IMR-90 (cell line): ENCODE measurements at regions of chr2 and their contacts with region 1.

Region 1: GRCh38 chr2:158903711-158904443 is 64.6 kb upstream of the TANC1 start:
- DNase-seq: no peak
- ATAC-seq: no peak
- H3K4me3 ChIP-seq: no peak overlapping the region
- H3K27ac ChIP-seq: no peak overlapping the region
- H3K4me1 ChIP-seq: peaks cover 2% of the 10 kb centered on the region
- H3K27me3 ChIP-seq: no peaks in the 10 kb centered on the region
- CTCF ChIP-seq: no peak
- POLR2A ChIP-seq: no peak
- RAD21 ChIP-seq: no peak

Region 2: DNA sequence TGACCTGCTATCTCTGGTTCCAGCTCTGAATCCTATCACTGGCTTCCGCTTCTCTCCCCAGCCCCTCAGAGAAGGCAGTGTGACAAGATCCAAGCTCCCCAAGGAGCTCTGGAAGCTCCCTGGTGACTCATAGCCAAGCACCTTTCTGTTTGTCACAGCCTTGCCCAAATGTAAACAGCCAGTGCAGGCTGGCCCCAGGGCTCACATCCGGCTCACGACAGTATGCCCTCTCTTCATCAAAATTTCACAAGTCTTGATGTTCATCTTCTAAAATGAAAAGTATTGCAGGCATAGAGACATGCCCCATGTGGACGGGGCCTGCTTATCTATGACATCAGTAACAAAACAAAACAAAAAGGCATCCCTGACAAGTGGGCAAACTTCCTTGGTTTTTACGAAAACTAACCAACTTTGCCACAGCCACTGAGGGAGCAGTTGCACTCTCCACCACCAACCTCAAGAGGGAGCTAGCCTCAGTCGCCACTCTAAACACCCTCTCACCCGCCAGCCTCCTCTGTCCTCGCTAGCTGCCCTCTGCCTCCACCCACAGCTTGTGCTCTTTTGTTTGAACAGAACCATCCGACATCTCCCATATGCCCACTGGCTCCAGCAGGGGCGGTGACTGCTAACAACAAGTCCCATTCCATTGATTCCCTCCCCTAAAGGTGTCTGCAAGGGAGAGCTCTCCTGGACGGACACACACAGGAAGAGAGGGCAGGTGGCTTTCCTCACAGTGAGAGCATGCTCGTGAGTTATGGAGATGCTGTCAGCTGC is 179.8 kb before region 1 on chr2:
- CTCF ChIA-PET with region 1: no interaction called
- POLR2A ChIA-PET with region 1: no interaction called
- dilution Hi-C with region 1: no loop called
- in situ Hi-C with region 1: no loop called
- intact Hi-C with region 1: no loop called
- DNase-seq: no peak
- ATAC-seq: peak; percentile 30
- H3K4me3 ChIP-seq: no peak overlapping the region
- H3K27ac ChIP-seq: no peak overlapping the region
- H3K4me1 ChIP-seq: peaks cover 2% of the 10 kb centered on the region; the same call in 1 of the 2 replicates
- H3K27me3 ChIP-seq: peaks cover 2% of the 10 kb centered on the region; the same call in 1 of the 2 replicates
- CTCF ChIP-seq: 0 out of 2 replicates have a peak, but pooled peaks have one; percentile 10
- POLR2A ChIP-seq: no peak
- RAD21 ChIP-seq: no peak

Region 3: GRCh38 chr2:158968396-158969161 is 64.7 kb after region 1 on chr2 and contains the start of gene TANC1:
- CTCF ChIA-PET with region 1: interaction called, 3 read pairs
- POLR2A ChIA-PET with region 1: no interaction called
- dilution Hi-C with region 1: no loop called
- in situ Hi-C with region 1: no loop called
- intact Hi-C with region 1: loop called (anchors 2 kb)
- DNase-seq: peak; percentile 90
- ATAC-seq: peak; percentile 93
- H3K4me3 ChIP-seq: peak within 1 kb of the TSS; percentile 87
- H3K27ac ChIP-seq: peak within 1 kb of the TSS; percentile 90
- H3K4me1 ChIP-seq: peaks cover 10% of the 10 kb centered on the region
- H3K27me3 ChIP-seq: no peaks in the 10 kb centered on the region
- CTCF ChIP-seq: no peak
- POLR2A ChIP-seq: peak; percentile 88
- RAD21 ChIP-seq: no peak; the same call in 1 of the 2 replicates
- total RNA-seq, gene TANC1: 12.8 and 12.9 TPM in 2 replicates

Region 4: DNA sequence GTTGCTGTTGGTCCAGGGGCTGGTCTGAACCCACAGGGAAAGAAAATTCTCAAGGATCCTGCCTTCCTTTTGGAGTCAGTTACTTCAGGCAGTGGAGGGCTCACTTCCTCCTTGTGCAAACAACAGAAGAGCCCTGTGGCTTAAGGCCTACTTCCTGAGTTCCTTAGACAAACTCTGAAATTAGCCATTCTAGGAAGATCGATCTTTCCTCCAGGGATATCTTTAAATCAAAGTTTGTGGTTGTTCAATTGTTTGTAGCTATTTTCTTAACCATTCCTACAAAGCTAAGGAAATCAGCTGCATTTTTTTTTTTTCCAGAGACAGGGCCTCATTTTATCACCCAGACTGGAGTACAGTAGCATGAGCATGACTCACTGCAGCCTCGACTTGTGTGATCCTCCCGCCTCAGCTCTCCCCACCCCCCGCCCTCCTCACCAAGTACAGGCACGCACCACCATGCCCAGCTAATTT is 220.6 kb after region 1 on chr2:
- CTCF ChIA-PET with region 1: interaction called, 14 read pairs
- POLR2A ChIA-PET with region 1: no interaction called
- dilution Hi-C with region 1: loop called (anchors 25 kb)
- in situ Hi-C with region 1: loop called (anchors 5 kb)
- intact Hi-C with region 1: no loop called
- DNase-seq: peak; percentile 92
- ATAC-seq: peak; percentile 91
- H3K4me3 ChIP-seq: no peak overlapping the region
- H3K27ac ChIP-seq: peak overlapping the region; percentile 63
- H3K4me1 ChIP-seq: peaks cover 24% of the 10 kb centered on the region
- H3K27me3 ChIP-seq: no peaks in the 10 kb centered on the region
- CTCF ChIP-seq: no peak
- POLR2A ChIP-seq: no peak
- RAD21 ChIP-seq: 0 out of 2 replicates have a peak, but pooled peaks have one; percentile 6

Region 5: GRCh38 chr2:159185401-159186130 is 281.7 kb after region 1 on chr2:
- CTCF ChIA-PET with region 1: no interaction called
- POLR2A ChIA-PET with region 1: no interaction called
- dilution Hi-C with region 1: no loop called
- in situ Hi-C with region 1: no loop called
- intact Hi-C with region 1: loop called (anchors 5 kb)
- DNase-seq: peak; percentile 58
- ATAC-seq: peak; percentile 63; the same call in 1 of the 2 replicates
- H3K4me3 ChIP-seq: no peak overlapping the region
- H3K27ac ChIP-seq: no peak overlapping the region
- H3K4me1 ChIP-seq: peaks cover 5% of the 10 kb centered on the region
- H3K27me3 ChIP-seq: no peaks in the 10 kb centered on the region
- CTCF ChIP-seq: peak; percentile 49
- POLR2A ChIP-seq: no peak
- RAD21 ChIP-seq: peak; percentile 65

Region 6: GRCh38 chr2:159807183-159808031 is 903.5 kb after region 1 on chr2:
- CTCF ChIA-PET with region 1: no interaction called
- POLR2A ChIA-PET with region 1: no interaction called
- dilution Hi-C with region 1: no loop called
- in situ Hi-C with region 1: no loop called
- intact Hi-C with region 1: loop called (anchors 10 kb)
- DNase-seq: peak; percentile 61
- ATAC-seq: peak; percentile 70
- H3K4me3 ChIP-seq: no peak overlapping the region
- H3K27ac ChIP-seq: no peak overlapping the region
- H3K4me1 ChIP-seq: no peaks in the 10 kb centered on the region
- H3K27me3 ChIP-seq: peaks cover 16% of the 10 kb centered on the region
- CTCF ChIP-seq: peak; percentile 75
- POLR2A ChIP-seq: no peak
- RAD21 ChIP-seq: peak; percentile 71